ENCODE measurements at regions of chr12 and their contacts with region 1.

Region 1: GRCh38 chr12:27462151-27462694 is 15.7 kb downstream of the SMCO2 start:
- DNase-seq: peak; percentile 34
- H3K4me3 Mint-ChIP-seq: peak overlapping the region; percentile 20
- H3K27ac Mint-ChIP-seq: peak overlapping the region; percentile 8
- H3K4me1 Mint-ChIP-seq: peaks cover 50% of the 10 kb centered on the region
- H3K27me3 Mint-ChIP-seq: peaks cover 20% of the 10 kb centered on the region

Region 2: DNA sequence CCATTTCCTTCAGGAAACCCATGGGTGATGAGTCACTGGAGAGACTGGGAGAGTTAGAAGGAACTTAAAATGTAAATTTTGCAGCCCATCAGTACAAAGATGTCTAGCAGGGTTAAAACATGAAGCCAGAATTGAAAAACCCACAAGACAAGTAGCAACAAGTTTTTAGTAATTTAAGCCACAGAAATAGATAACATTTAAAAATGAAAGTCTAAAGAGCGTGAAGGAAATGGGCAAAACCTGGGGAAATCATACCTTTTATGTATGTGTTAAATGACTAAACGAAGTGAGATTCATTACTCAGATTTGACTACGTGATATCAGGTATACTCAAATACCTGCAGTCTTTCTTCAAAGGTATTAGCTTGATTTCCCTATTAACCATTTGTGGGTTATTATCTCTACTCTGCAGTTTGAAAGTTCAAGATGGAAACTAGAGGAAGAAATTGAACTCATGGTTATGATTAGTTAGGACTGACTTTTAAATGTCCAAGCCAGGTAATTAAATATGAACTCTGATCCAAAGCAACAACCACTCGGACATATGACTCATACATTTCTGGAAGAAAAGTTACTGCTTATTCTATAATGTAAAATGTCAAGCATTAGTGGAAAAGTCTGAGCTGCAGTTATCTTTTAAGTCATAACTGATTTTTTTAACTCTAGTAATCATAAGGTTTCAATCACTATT is 713.3 kb before region 1 on chr12:
- CTCF ChIA-PET with region 1: no interaction called
- POLR2A ChIA-PET with region 1: no interaction called
- intact Hi-C with region 1: loop called (anchors 5 kb)
- DNase-seq: no peak
- H3K4me3 Mint-ChIP-seq: peak overlapping the region; percentile 16
- H3K27ac Mint-ChIP-seq: peak overlapping the region; percentile 69
- H3K4me1 Mint-ChIP-seq: peaks cover 55% of the 10 kb centered on the region
- H3K27me3 Mint-ChIP-seq: no peaks in the 10 kb centered on the region

Region 3: GRCh38 chr12:27498149-27498548 is 35.9 kb after region 1 on chr12:
- CTCF ChIA-PET with region 1: interaction called, 4 read pairs
- POLR2A ChIA-PET with region 1: no interaction called
- intact Hi-C with region 1: loop called (anchors 1 kb)
- DNase-seq: no peak
- H3K4me3 Mint-ChIP-seq: no peak overlapping the region
- H3K27ac Mint-ChIP-seq: no peak overlapping the region
- H3K4me1 Mint-ChIP-seq: peaks cover 23% of the 10 kb centered on the region
- H3K27me3 Mint-ChIP-seq: peaks cover 31% of the 10 kb centered on the region

Region 4: GRCh38 chr12:27523642-27524493 is 61.6 kb after region 1 on chr12 and contains the start of gene PPFIBP1:
- CTCF ChIA-PET with region 1: interaction called, 7 read pairs
- POLR2A ChIA-PET with region 1: no interaction called
- intact Hi-C with region 1: loop called (anchors 2 kb)
- DNase-seq: peak; percentile 99
- H3K4me3 Mint-ChIP-seq: peak within 1 kb of the TSS; percentile 93
- H3K27ac Mint-ChIP-seq: peak within 1 kb of the TSS; percentile 79
- H3K4me1 Mint-ChIP-seq: peaks cover 18% of the 10 kb centered on the region
- H3K27me3 Mint-ChIP-seq: peaks cover 8% of the 10 kb centered on the region
- total RNA-seq, gene PPFIBP1: 14.1 to 14.9 TPM

Region 5: GRCh38 chr12:27534060-27534764 is 72.0 kb after region 1 on chr12:
- CTCF ChIA-PET with region 1: no interaction called
- POLR2A ChIA-PET with region 1: interaction called, 7 read pairs
- intact Hi-C with region 1: loop called (anchors 1 kb)
- DNase-seq: peak; percentile 41
- H3K4me3 Mint-ChIP-seq: no peak overlapping the region
- H3K27ac Mint-ChIP-seq: peak overlapping the region; percentile 47
- H3K4me1 Mint-ChIP-seq: peaks cover 32% of the 10 kb centered on the region
- H3K27me3 Mint-ChIP-seq: peaks cover 2% of the 10 kb centered on the region

Region 6: GRCh38 chr12:27549801-27550652 is 87.8 kb after region 1 on chr12:
- CTCF ChIA-PET with region 1: no interaction called
- POLR2A ChIA-PET with region 1: no interaction called
- intact Hi-C with region 1: loop called (anchors 5 kb)
- DNase-seq: no peak
- H3K4me3 Mint-ChIP-seq: no peak overlapping the region
- H3K27ac Mint-ChIP-seq: no peak overlapping the region
- H3K4me1 Mint-ChIP-seq: peaks cover 7% of the 10 kb centered on the region
- H3K27me3 Mint-ChIP-seq: peaks cover 4% of the 10 kb centered on the region

Region 7: GRCh38 chr12:27710592-27711316 is 248.5 kb after region 1 on chr12 and contains the start of gene MRPS35:
- CTCF ChIA-PET with region 1: no interaction called
- POLR2A ChIA-PET with region 1: no interaction called
- intact Hi-C with region 1: loop called (anchors 2 kb)
- DNase-seq: peak; percentile 95
- H3K4me3 Mint-ChIP-seq: peak within 1 kb of the TSS; percentile 93
- H3K27ac Mint-ChIP-seq: peak within 1 kb of the TSS; percentile 90
- H3K4me1 Mint-ChIP-seq: peaks cover 17% of the 10 kb centered on the region
- H3K27me3 Mint-ChIP-seq: peaks cover 3% of the 10 kb centered on the region
- total RNA-seq, gene MRPS35: 49.2 to 50.2 TPM